HepG2 (cell line): ENCODE measurements at regions of chr16 and their contacts with region 1.

Region 1: GRCh38 chr16:53054670-53055485 is at the start of gene CHD9:
- DNase-seq: peak; percentile 90
- ATAC-seq: peak; percentile 87
- H3K4me3 ChIP-seq: peak within 1 kb of the TSS; percentile 73 to 88 (median 76)
- H3K27ac ChIP-seq: peak within 1 kb of the TSS; percentile 85
- H3K4me1 ChIP-seq: peaks cover 74% of the 10 kb centered on the region
- H3K27me3 ChIP-seq: no peaks in the 10 kb centered on the region; a peak in 1 of 5 replicates
- CTCF ChIP-seq: peak; percentile 100
- EP300 ChIP-seq: peak in 1 of 2 experiments; percentile 33; a peak in 1 of 4 replicates
- POLR2A ChIP-seq: peak; percentile 64 to 70
- RAD21 ChIP-seq: peak; percentile 100
- total RNA-seq, gene CHD9: 27.7 and 31.0 TPM in 2 replicates

Region 2: DNA sequence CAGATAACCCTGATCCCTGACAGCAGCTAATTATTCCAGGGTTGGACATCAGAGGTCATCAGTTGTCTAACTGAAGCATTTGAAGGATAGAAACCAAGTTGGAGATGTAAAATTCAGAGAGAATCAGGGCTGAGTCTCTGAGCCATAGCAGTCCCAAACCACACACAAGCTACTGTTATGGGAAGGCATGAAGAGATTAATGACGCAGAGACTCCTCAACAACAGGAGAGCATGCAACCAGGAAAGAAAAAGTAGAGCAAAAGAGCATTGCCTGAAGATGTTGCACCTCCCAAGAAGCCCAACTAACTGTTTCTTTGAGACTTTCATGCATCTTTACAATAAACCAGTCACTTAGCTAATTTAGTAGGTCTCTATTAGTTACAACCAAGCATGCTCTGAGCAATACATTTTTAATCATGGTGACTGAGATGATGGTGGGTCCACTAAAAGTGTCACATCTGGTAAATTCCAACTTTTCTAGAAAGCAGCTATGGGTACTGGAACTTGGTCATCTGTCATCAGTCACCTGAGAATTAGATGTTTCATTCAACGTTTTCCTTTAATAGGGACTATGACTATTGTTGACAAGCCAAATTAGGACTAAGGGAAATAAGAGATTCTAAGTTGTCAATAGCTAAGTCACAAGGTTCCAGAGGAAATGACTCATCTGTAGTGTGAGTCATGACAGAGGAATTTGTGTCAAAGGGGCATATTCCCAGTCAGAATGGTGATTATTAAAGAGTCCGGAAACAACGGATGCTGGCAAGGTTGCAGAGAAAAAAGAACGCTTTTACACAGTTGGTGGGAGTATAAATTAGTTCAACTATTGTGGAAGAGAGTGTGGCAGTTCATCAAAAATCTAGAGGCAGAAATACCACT is 242.0 kb before region 1 on chr16:
- CTCF ChIA-PET with region 1: no interaction called
- POLR2A ChIA-PET with region 1: no interaction called
- in situ Hi-C with region 1: no loop called
- intact Hi-C with region 1: no loop called
- DNase-seq: peak; percentile 84
- ATAC-seq: peak; percentile 79
- H3K4me3 ChIP-seq: no peak overlapping the region
- H3K27ac ChIP-seq: no peak overlapping the region
- H3K4me1 ChIP-seq: peaks cover 28% of the 10 kb centered on the region
- H3K27me3 ChIP-seq: no peaks in the 10 kb centered on the region; a peak in 1 of 5 replicates
- CTCF ChIP-seq: no peak
- EP300 ChIP-seq: peak in 1 of 2 experiments; percentile 80; a peak in 2 of 4 replicates
- POLR2A ChIP-seq: no peak
- RAD21 ChIP-seq: no peak

Region 3: DNA sequence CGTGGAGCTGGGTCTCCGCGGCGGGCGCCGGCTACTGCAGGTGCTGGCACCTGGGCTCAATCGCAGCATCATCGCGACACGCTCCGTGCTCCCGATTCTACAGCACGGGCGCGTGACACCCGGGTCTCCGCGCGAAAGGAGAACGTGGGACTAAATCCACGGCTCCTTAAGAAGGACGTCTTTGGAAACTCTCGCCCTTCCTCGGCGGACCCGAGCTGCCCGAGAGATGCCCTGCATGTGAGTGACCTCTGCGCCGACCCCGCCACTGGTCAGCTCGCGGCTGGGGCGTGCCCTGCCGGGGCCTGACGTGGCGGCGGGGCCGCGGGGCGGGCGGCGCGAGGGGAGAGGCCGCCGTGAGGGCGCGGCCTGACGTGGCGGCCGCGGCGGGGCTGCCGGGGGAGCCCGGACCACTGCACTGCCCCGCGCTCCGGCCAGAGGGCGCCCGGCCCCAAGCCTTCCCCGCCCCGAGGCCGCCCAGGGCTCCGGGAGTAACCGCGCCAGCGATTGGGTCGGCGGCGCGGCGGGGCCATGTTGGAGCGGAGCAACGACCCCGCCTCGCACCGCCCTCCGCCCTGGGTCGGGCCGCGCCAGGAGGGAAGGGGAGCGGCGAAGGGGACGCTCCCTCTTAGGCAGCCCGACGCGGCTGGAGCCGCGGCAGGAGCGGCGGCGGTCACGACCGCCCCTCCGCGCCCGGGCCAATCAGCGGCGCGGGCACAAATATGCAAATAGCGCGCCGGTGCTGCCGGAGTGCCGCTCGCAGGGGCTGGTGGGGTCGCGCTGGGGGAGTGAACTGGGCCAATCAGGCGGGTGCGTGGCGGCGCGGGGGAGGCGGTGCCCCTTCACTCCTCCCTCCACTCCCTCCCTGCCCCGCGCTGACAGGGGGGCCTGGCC is 75.5 kb after region 1 on chr16:
- CTCF ChIA-PET with region 1: interaction called, 8 read pairs
- POLR2A ChIA-PET with region 1: interaction called, 26 read pairs
- in situ Hi-C with region 1: loop called (anchors 10 kb)
- intact Hi-C with region 1: loop called (anchors 1 kb)
- DNase-seq: peak; percentile 91
- ATAC-seq: peak; percentile 90
- H3K4me3 ChIP-seq: peak overlapping the region; percentile 76 to 96 (median 84)
- H3K27ac ChIP-seq: peak overlapping the region; percentile 96
- H3K4me1 ChIP-seq: peaks cover 42% of the 10 kb centered on the region
- H3K27me3 ChIP-seq: no peaks in the 10 kb centered on the region; a peak in 2 of 5 replicates
- CTCF ChIP-seq: peak; percentile 74
- EP300 ChIP-seq: peak in 1 of 2 experiments; percentile 29; a peak in 1 of 4 replicates
- POLR2A ChIP-seq: peak; percentile 90 to 96
- RAD21 ChIP-seq: peak; percentile 99

Region 4: GRCh38 chr16:53168744-53169143 is 113.9 kb after region 1 on chr16:
- CTCF ChIA-PET with region 1: no interaction called
- POLR2A ChIA-PET with region 1: no interaction called
- in situ Hi-C with region 1: no loop called
- intact Hi-C with region 1: no loop called
- DNase-seq: no peak
- ATAC-seq: no peak
- H3K4me3 ChIP-seq: no peak overlapping the region
- H3K27ac ChIP-seq: no peak overlapping the region
- H3K4me1 ChIP-seq: peaks cover 9% of the 10 kb centered on the region; the same call in 1 of the 2 replicates
- H3K27me3 ChIP-seq: no peaks in the 10 kb centered on the region
- CTCF ChIP-seq: no peak
- EP300 ChIP-seq: no peak
- POLR2A ChIP-seq: no peak
- RAD21 ChIP-seq: no peak

Region 5: GRCh38 chr16:53207810-53208752 is 153.2 kb after region 1 on chr16:
- CTCF ChIA-PET with region 1: interaction called, 17 read pairs
- POLR2A ChIA-PET with region 1: no interaction called
- in situ Hi-C with region 1: no loop called
- intact Hi-C with region 1: loop called (anchors 1 kb)
- DNase-seq: peak; percentile 72
- ATAC-seq: peak; percentile 92
- H3K4me3 ChIP-seq: no peak overlapping the region
- H3K27ac ChIP-seq: peak overlapping the region; percentile 14
- H3K4me1 ChIP-seq: no peaks in the 10 kb centered on the region
- H3K27me3 ChIP-seq: no peaks in the 10 kb centered on the region
- CTCF ChIP-seq: peak; percentile 63
- EP300 ChIP-seq: no peak
- POLR2A ChIP-seq: no peak
- RAD21 ChIP-seq: peak; percentile 58; the same call in 1 of the 2 replicates

Region 6: GRCh38 chr16:53282975-53283946 is 228.4 kb after region 1 on chr16:
- CTCF ChIA-PET with region 1: no interaction called
- POLR2A ChIA-PET with region 1: interaction called, 3 read pairs
- in situ Hi-C with region 1: loop called (anchors 10 kb)
- intact Hi-C with region 1: loop called (anchors 1 kb)
- DNase-seq: peak; percentile 55
- ATAC-seq: peak; percentile 81
- H3K4me3 ChIP-seq: no peak overlapping the region
- H3K27ac ChIP-seq: no peak overlapping the region
- H3K4me1 ChIP-seq: no peaks in the 10 kb centered on the region
- H3K27me3 ChIP-seq: no peaks in the 10 kb centered on the region
- CTCF ChIP-seq: peak; percentile 75
- EP300 ChIP-seq: no peak
- POLR2A ChIP-seq: no peak
- RAD21 ChIP-seq: 0 out of 2 replicates have a peak, but pooled peaks have one; percentile 40

Region 7: DNA sequence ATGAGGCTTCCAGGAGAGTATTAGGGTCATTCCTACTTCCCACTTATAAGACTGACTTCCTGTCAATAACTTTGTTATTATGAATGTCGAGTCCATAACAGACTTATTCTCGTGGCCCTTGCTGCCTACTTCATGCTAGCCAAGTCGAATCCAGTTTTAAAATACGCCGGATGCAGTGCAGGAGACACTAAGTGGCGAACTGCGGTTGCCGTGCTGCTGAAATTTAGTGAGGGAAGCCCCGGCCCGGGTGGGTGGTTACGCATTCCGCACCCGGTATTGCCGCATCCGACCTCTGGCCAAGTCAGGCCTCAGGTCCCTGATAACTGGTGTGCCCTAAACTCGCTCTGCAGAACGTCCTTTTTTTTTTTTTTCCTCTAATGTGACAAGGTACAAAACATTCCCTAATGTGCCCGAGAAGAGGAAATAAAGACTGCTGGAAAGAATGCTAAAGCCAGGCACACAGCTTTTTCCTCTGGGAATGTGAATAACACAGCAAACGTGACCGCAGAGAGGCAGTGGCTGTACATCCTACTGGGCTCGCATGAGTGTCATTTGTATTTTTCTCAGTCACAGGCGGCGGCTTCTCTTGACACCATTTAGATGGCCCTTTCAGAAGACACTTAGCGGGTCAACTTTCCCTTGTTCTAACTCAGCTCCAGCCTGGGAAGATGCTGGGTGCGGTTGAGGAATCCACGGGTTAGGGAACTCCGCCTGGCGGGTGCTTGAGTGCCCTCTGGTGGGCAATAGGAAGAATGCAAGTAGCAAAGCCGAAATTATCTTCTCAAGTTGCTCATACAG is 455.2 kb after region 1 on chr16:
- CTCF ChIA-PET with region 1: no interaction called
- POLR2A ChIA-PET with region 1: no interaction called
- in situ Hi-C with region 1: no loop called
- intact Hi-C with region 1: loop called (anchors 10 kb)
- DNase-seq: peak; percentile 67
- ATAC-seq: peak; percentile 70
- H3K4me3 ChIP-seq: peak overlapping the region; percentile 42 to 70 (median 50)
- H3K27ac ChIP-seq: peak overlapping the region; percentile 36
- H3K4me1 ChIP-seq: peaks cover 50% of the 10 kb centered on the region
- H3K27me3 ChIP-seq: no peaks in the 10 kb centered on the region
- CTCF ChIP-seq: peak; percentile 88
- EP300 ChIP-seq: peak in 1 of 2 experiments; percentile 31; a peak in 1 of 4 replicates
- POLR2A ChIP-seq: peak in 1 of 2 experiments; percentile 30; a peak in 1 of 4 replicates
- RAD21 ChIP-seq: peak; percentile 70